T-cell (primary cell): ENCODE measurements at regions of chr3 and their contacts with region 1.

Region 1: DNA sequence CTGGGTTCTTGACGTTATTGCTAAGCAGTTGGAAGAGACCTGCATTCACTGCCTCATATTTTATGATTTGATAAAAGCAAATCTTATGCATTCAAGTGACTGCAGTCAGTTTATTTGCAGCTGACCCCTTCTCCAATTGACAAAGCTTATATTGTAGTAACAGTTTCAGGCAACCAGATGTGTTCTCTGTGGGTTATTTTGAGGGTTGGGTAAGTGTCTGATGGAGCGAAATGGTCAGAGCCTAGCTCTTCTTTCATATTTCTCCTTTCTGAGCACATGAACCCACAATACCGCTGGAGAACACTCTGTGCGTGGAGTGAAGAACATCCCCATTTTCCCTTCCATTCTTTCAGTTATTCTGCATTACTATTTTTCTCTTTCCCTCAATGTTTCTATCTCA is 125.8 kb upstream of the KCNH8 start:
- DNase-seq: no peak
- ATAC-seq: no peak
- H3K4me3 ChIP-seq: no peak overlapping the region
- H3K4me3 Mint-ChIP-seq: no peak overlapping the region
- H3K27ac ChIP-seq: no peak overlapping the region
- H3K27ac Mint-ChIP-seq: no peak overlapping the region
- H3K4me1 ChIP-seq: no peaks in the 10 kb centered on the region
- H3K4me1 Mint-ChIP-seq: no peaks in the 10 kb centered on the region
- H3K27me3 ChIP-seq: no peaks in the 10 kb centered on the region
- H3K27me3 Mint-ChIP-seq: peaks cover 5 to 6% of the 10 kb centered on the region in 2 donors

Region 2: GRCh38 chr3:17882981-17883380 is 1139.6 kb before region 1 on chr3:
- CTCF ChIA-PET with region 1: no interaction called
- POLR2A ChIA-PET with region 1: no interaction called
- DNase-seq: no peak
- ATAC-seq: no peak
- H3K4me3 ChIP-seq: no peak overlapping the region
- H3K4me3 Mint-ChIP-seq: no peak overlapping the region
- H3K27ac ChIP-seq: no peak overlapping the region
- H3K27ac Mint-ChIP-seq: no peak overlapping the region
- H3K4me1 ChIP-seq: no peaks in the 10 kb centered on the region
- H3K4me1 Mint-ChIP-seq: no peaks in the 10 kb centered on the region
- H3K27me3 ChIP-seq: peaks cover 0 to 2% of the 10 kb centered on the region in 2 experiments
- H3K27me3 Mint-ChIP-seq: peaks cover under 1 to 1% of the 10 kb centered on the region in 2 donors

Region 3: GRCh38 chr3:18297126-18297525 is 725.4 kb before region 1 on chr3:
- CTCF ChIA-PET with region 1: no interaction called
- POLR2A ChIA-PET with region 1: interaction called in 1 of 2 experiments, 10 read pairs
- DNase-seq: no peak
- ATAC-seq: no peak
- H3K4me3 ChIP-seq: no peak overlapping the region
- H3K4me3 Mint-ChIP-seq: no peak overlapping the region
- H3K27ac ChIP-seq: no peak overlapping the region
- H3K27ac Mint-ChIP-seq: no peak overlapping the region
- H3K4me1 ChIP-seq: no peaks in the 10 kb centered on the region
- H3K4me1 Mint-ChIP-seq: no peaks in the 10 kb centered on the region
- H3K27me3 ChIP-seq: peaks cover 0 to 3% of the 10 kb centered on the region in 2 experiments
- H3K27me3 Mint-ChIP-seq: peaks cover 2% of the 10 kb centered on the region in 2 donors